ENCODE measurements at regions of chr16 and their contacts with region 1.

Region 1: GRCh38 chr16:11880007-11880406 is 28.7 kb upstream of the RSL1D1 start:
- DNase-seq: no peak
- ATAC-seq: peak; percentile 45
- H3K4me3 ChIP-seq: no peak overlapping the region
- H3K4me3 Mint-ChIP-seq: no peak overlapping the region
- H3K27ac ChIP-seq: no peak overlapping the region
- H3K27ac Mint-ChIP-seq: peak overlapping the region in 4 of 9 donors; percentile 14 to 64 (median 16)
- H3K4me1 ChIP-seq: no peaks in the 10 kb centered on the region
- H3K4me1 Mint-ChIP-seq: peaks cover 0 to 5% (median 0%) of the 10 kb centered on the region in 7 donors
- H3K27me3 ChIP-seq: no peaks in the 10 kb centered on the region
- H3K27me3 Mint-ChIP-seq: no peaks in the 10 kb centered on the region

Region 2: DNA sequence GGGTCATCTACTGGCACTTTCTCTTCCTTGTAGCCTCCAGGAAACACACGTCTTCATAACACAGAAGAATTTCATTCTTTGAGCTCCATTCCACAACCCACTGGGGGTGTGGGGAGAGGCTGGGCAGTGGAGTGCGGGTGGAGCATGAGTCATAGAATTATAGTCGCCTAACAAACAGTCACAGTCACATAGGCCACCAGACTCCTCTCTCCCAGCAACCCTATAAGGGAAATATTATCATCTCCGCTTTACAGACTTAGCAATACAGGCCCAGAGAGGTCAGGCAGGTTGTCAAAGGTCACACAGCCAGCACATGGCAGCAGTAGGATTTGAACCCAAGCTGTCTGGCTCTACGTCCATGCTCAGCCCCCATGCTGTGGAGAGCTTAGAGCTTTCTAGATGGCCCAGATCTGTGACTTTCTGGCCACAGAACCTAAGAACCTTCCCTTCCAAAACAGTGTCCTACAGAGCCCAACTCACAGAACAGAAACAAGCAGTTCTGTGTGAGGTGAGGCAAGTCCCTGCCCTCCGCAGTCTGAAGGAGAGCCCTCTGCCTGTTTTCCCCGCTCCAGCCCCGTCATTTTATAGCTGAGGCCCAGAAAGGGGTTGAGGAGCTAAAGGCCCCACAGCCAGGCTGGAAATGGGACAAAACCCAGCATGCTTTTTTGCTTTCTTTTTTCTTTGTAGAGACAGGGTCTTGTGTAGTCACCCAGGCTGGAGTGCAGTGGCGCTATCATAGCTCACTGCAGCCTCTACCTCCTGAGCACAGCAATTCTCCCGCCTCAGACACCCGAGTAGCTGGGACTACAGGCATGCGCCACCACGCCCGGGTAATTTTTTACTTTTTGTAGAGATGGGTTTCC is 282.5 kb before region 1 on chr16:
- CTCF ChIA-PET with region 1: no interaction called
- POLR2A ChIA-PET with region 1: no interaction called
- intact Hi-C with region 1: no loop called
- DNase-seq: peak in 2 of 9 donors; percentile 24
- ATAC-seq: peak; percentile 85
- H3K4me3 ChIP-seq: no peak overlapping the region
- H3K4me3 Mint-ChIP-seq: peak overlapping the region in 4 of 10 donors; percentile 9 to 54 (median 14)
- H3K27ac ChIP-seq: peak overlapping the region; percentile 34
- H3K27ac Mint-ChIP-seq: peak overlapping the region; percentile 40 to 88 (median 81)
- H3K4me1 ChIP-seq: peaks cover 0 to 13% of the 10 kb centered on the region in 2 donors
- H3K4me1 Mint-ChIP-seq: peaks cover 8 to 26% (median 16%) of the 10 kb centered on the region in 7 donors
- H3K27me3 ChIP-seq: no peaks in the 10 kb centered on the region
- H3K27me3 Mint-ChIP-seq: peaks cover 0 to 5% (median 0%) of the 10 kb centered on the region in 5 donors

Region 3: DNA sequence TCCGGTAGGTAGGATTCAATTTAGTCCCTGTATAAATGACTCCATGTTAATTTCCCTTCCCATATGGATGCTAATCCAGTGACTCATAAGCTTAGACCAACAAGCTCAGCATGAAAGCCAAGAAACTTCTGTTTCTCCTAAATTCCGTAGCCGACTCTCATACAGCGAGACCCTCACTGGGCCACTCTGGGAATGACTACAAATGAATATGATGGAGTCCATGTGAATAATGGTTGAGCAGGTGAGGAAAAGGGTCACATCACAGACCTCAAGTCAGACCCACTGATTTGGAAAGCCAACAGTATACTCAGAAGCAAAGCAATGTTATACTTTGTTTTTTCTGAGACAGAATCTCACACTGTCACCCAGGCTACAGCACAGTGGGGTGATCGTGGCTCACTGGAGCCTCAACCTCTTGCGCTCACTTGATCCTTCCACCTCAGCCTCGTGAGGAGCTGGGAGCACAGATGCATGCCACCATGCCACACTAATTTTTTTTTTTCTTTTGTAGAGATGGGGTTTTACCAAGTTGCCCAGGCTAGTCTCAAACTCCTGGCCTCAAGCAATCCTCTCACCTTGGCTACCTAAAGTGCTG is 43.3 kb before region 1 on chr16:
- CTCF ChIA-PET with region 1: no interaction called
- POLR2A ChIA-PET with region 1: no interaction called
- intact Hi-C with region 1: no loop called
- DNase-seq: no peak
- ATAC-seq: no peak
- H3K4me3 ChIP-seq: no peak overlapping the region
- H3K4me3 Mint-ChIP-seq: no peak overlapping the region
- H3K27ac ChIP-seq: no peak overlapping the region
- H3K27ac Mint-ChIP-seq: peak overlapping the region in 1 of 9 donors; percentile 15
- H3K4me1 ChIP-seq: no peaks in the 10 kb centered on the region
- H3K4me1 Mint-ChIP-seq: peaks cover 0 to 4% (median 0%) of the 10 kb centered on the region in 7 donors
- H3K27me3 ChIP-seq: no peaks in the 10 kb centered on the region
- H3K27me3 Mint-ChIP-seq: no peaks in the 10 kb centered on the region

Region 4: DNA sequence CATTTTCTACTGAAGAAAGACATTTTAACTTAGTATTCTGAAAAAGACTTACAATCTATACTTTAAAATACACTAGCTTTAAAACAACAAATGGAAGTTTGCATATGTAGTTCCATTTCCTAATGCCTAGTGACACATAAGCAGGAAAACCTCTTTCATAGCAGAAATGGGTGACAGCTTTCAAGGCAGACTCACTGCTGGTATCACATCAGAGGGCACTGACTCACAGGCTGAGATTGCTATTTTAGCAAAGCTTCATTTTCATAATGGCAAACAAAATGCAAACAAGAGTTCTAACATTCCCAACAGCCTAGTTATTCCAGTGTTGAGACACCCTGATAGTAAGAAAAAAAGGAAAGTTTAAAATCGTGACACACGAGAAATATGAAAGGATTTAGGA is 16.8 kb after region 1 on chr16:
- CTCF ChIA-PET with region 1: no interaction called
- POLR2A ChIA-PET with region 1: interaction called, 3 read pairs
- intact Hi-C with region 1: loop called in 1 of 2 experiments (anchors 2 kb)
- DNase-seq: no peak
- ATAC-seq: no peak
- H3K4me3 ChIP-seq: no peak overlapping the region
- H3K4me3 Mint-ChIP-seq: no peak overlapping the region
- H3K27ac ChIP-seq: no peak overlapping the region
- H3K27ac Mint-ChIP-seq: peak overlapping the region in 6 of 9 donors; percentile 2 to 76 (median 46)
- H3K4me1 ChIP-seq: peaks cover 13 to 15% of the 10 kb centered on the region in 2 donors
- H3K4me1 Mint-ChIP-seq: peaks cover 25 to 52% (median 41%) of the 10 kb centered on the region in 7 donors
- H3K27me3 ChIP-seq: no peaks in the 10 kb centered on the region
- H3K27me3 Mint-ChIP-seq: no peaks in the 10 kb centered on the region

Region 5: GRCh38 chr16:12067714-12068401 is 187.9 kb after region 1 on chr16:
- CTCF ChIA-PET with region 1: no interaction called
- POLR2A ChIA-PET with region 1: no interaction called
- intact Hi-C with region 1: no loop called
- DNase-seq: peak; percentile 17 to 76 (median 68)
- ATAC-seq: peak; percentile 89
- H3K4me3 ChIP-seq: no peak overlapping the region
- H3K4me3 Mint-ChIP-seq: no peak overlapping the region
- H3K27ac ChIP-seq: no peak overlapping the region
- H3K27ac Mint-ChIP-seq: peak overlapping the region in 3 of 9 donors; percentile 51 to 64 (median 52)
- H3K4me1 ChIP-seq: no peaks in the 10 kb centered on the region
- H3K4me1 Mint-ChIP-seq: peaks cover 0 to 6% (median 5%) of the 10 kb centered on the region in 7 donors
- H3K27me3 ChIP-seq: no peaks in the 10 kb centered on the region
- H3K27me3 Mint-ChIP-seq: no peaks in the 10 kb centered on the region